ENCODE measurements at regions of chr1 and their contacts with region 1.

Region 1: DNA sequence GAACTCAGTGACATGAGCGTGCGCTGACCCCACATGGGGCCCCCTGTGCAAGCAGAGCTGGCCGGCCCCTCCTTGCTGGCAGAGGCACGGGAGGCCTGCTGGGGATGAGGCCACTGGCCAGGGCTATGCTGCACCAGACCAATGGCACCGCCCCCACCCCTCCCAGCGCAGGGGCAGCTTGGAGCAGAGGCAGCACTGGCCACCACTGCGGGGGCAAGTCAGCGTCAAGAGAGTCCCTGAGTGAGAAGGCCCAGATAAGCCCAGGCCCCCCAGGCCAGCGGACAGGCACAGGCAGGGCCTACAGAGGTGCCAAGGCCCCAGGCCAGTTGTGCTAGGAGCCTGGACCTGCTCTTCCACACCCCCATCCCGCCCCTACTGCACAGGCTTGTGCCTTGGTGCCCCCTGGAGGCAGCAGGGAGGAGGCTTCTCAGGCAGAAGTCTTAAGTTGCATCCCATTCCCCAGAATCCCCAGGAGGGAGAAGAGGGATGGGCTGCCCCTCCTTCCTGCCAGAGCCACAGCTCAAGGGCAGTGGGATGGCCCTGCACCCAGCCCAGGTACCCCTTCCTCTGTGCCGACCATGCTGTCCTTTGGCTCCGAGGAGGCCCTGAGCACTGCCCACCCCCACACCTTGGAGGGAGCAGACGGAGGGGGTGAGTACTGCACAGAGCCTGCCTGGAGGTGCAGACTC is 35.8 kb downstream of the EPHX1 start:
- DNase-seq: no peak
- H3K4me3 ChIP-seq: no peak overlapping the region
- H3K27ac ChIP-seq: peak overlapping the region; percentile 37 to 59 (median 55)
- H3K4me1 ChIP-seq: peaks cover 10 to 34% (median 15%) of the 10 kb centered on the region in 4 donors
- H3K27me3 ChIP-seq: no peaks in the 10 kb centered on the region
- CTCF ChIP-seq: peak; percentile 80 to 88 (median 85)
- EP300 ChIP-seq: no peak
- POLR2A ChIP-seq: no peak

Region 2: DNA sequence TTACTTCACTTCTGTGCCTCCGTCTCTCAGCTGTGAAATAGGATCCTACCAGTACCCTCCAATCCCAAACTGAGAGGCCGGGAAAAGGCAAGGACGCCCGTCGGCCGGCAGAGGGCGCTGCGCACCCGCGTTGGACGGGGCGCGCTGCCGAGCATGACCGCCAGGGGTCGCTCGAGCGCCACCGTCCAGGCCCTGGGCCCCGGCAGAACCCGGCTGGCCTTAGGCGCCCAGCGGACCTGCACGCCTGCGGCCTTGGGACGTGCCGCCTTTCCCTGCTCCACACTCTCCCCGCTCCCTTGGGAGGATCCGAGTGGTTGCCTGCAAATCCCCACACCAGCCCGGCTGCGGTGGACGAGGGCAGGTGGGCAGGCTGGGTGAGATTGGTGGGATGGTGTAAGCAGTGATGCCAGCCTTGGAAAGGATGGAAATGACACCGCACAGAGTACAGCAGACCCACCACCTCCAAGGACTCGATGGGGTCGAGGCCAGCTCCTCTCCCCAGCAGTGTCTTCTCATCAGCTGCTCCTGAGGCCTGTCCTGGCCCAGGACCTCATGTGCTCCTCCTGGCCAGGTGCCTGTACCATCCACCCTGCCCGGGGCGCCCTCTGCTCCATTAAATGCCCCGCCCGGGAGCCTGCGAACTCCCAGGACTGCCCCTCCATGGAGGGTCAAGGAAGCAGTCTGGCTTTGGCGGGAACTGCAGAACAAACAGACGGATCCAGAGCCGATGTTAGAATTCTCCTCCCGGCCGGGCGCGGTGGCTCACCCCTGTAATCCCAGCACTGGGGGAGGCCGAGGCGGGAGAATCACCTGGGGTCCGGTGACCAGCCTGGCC is 370.5 kb before region 1 on chr1:
- intact Hi-C with region 1: loop called (anchors 2 kb)
- DNase-seq: peak; percentile 92
- H3K4me3 ChIP-seq: peak overlapping the region; percentile 15 to 43 (median 19)
- H3K27ac ChIP-seq: no peak overlapping the region
- H3K4me1 ChIP-seq: peaks cover 4 to 34% (median 26%) of the 10 kb centered on the region in 4 donors
- H3K27me3 ChIP-seq: no peaks in the 10 kb centered on the region
- CTCF ChIP-seq: peak in 2 of 3 experiments; percentile 100
- EP300 ChIP-seq: no peak
- POLR2A ChIP-seq: no peak

Region 3: DNA sequence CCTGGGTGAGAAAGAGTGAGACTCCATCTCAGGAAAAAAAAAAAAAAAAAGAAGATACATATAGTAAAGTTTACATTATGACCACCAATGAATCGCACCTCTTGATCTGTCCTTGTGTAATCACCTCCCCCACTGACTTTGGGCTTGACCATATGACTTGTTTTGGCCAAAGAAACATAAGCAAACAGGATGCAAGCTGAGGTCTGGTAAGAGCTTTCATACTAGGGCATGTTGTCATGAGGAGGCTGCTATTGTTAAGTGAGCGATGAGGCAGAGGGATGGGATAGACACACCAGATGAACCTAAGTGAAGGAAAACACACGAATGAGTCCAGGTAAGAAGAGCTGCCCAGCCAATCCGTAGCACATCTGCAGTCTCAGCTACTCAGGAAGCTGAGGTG is 203.5 kb before region 1 on chr1:
- intact Hi-C with region 1: loop called (anchors 10 kb)
- DNase-seq: no peak
- H3K4me3 ChIP-seq: no peak overlapping the region
- H3K27ac ChIP-seq: no peak overlapping the region
- H3K4me1 ChIP-seq: peaks cover 0 to 23% (median 18%) of the 10 kb centered on the region in 4 donors
- H3K27me3 ChIP-seq: no peaks in the 10 kb centered on the region
- CTCF ChIP-seq: no peak
- EP300 ChIP-seq: no peak
- POLR2A ChIP-seq: no peak

Region 4: GRCh38 chr1:225777583-225778336 is 68.0 kb before region 1 on chr1 and contains the start of gene SRP9:
- intact Hi-C with region 1: loop called (anchors 2 kb)
- DNase-seq: peak; percentile 99
- H3K4me3 ChIP-seq: peak within 1 kb of the TSS; percentile 60 to 71 (median 66)
- H3K27ac ChIP-seq: peak within 1 kb of the TSS; percentile 86 to 92 (median 89)
- H3K4me1 ChIP-seq: peaks cover 41 to 63% (median 58%) of the 10 kb centered on the region in 4 donors
- H3K27me3 ChIP-seq: no peaks in the 10 kb centered on the region
- CTCF ChIP-seq: peak; percentile 82 to 90 (median 88)
- EP300 ChIP-seq: no peak
- POLR2A ChIP-seq: peak; percentile 88
- total RNA-seq, gene SRP9: 95.1 to 192 (median 164) TPM

Region 5: DNA sequence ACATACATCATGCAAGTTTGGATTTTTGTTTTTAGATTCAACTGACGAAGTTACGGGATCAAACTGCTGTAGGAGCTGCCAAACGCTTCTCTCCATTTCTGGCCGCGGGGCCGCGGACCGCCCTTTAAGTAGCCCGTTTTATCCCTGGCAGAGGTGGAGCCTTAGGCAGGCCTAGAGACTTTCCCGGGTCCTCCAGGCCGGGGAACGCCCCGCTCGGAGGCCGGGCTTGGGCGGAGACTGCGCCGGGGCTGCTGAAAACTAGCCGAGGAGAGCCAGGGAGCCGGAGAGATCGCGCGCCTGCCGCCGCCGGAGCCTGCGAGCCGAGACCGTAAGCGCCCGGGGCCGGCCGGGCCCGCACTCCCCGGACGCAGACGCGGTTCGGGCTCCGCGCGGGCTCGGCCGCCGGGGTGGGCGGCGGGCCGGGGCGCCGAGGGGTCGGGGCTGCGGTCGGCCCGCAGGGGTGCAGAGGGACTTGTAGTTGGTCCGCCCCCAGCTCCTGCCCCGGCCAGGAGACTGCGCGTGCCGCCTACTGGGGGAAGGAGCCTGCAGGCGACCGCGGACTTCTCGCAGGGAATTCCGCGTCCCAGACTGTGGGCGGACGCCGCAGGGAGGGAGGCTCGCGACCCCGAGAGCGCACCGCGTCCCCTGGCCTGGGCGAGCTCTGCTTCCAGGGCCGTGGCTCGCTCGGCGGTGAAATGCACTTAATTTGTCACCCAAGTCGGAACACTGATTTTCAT is 35.7 kb before region 1 on chr1 and contains the start of gene EPHX1:
- intact Hi-C with region 1: loop called (anchors 2 kb)
- DNase-seq: peak; percentile 96
- H3K4me3 ChIP-seq: peak within 1 kb of the TSS; percentile 69 to 90 (median 77)
- H3K27ac ChIP-seq: peak within 1 kb of the TSS; percentile 84 to 89 (median 86)
- H3K4me1 ChIP-seq: peaks cover 45 to 56% (median 50%) of the 10 kb centered on the region in 4 donors
- H3K27me3 ChIP-seq: no peaks in the 10 kb centered on the region
- CTCF ChIP-seq: peak; percentile 31 to 54 (median 50)
- EP300 ChIP-seq: no peak
- POLR2A ChIP-seq: no peak
- total RNA-seq, gene EPHX1: 59.0 to 136 (median 85.6) TPM

Measured in esophagus muscularis mucosa (tissue), 4 donors.